Activated CD8-positive, alpha-beta T cell treated with anti-CD3 and anti-CD28 coated beads, Interleukin-2, amount 10 ng/mL, durations not matched to agents 7 days and 5 days (primary cell): ENCODE measurements at regions of chrX and their contacts with region 1.

Region 1: GRCh38 chrX:48737213-48737938 is 24.2 kb upstream of the GLOD5 start:
- DNase-seq: peak; percentile 93
- ATAC-seq: peak; percentile 100
- H3K4me3 Mint-ChIP-seq: peak overlapping the region; percentile 96
- H3K27ac Mint-ChIP-seq: peak overlapping the region; percentile 97
- H3K4me1 Mint-ChIP-seq: peaks cover 21% of the 10 kb centered on the region
- H3K27me3 Mint-ChIP-seq: no peaks in the 10 kb centered on the region

Region 2: GRCh38 chrX:48715072-48715471 is 22.3 kb before region 1 on chrX:
- CTCF ChIA-PET with region 1: interaction called, 3 read pairs
- POLR2A ChIA-PET with region 1: interaction called, 24 read pairs
- DNase-seq: no peak
- ATAC-seq: no peak
- H3K4me3 Mint-ChIP-seq: no peak overlapping the region
- H3K27ac Mint-ChIP-seq: peak overlapping the region; percentile 71
- H3K4me1 Mint-ChIP-seq: peaks cover 76% of the 10 kb centered on the region
- H3K27me3 Mint-ChIP-seq: no peaks in the 10 kb centered on the region

Region 3: GRCh38 chrX:48789366-48790220 is 52.2 kb after region 1 on chrX:
- CTCF ChIA-PET with region 1: no interaction called
- POLR2A ChIA-PET with region 1: no interaction called
- DNase-seq: peak; percentile 25
- ATAC-seq: no peak
- H3K4me3 Mint-ChIP-seq: no peak overlapping the region
- H3K27ac Mint-ChIP-seq: peak overlapping the region; percentile 80
- H3K4me1 Mint-ChIP-seq: peaks cover 16% of the 10 kb centered on the region
- H3K27me3 Mint-ChIP-seq: peaks cover 6% of the 10 kb centered on the region

Region 4: GRCh38 chrX:48864210-48864609 is 126.8 kb after region 1 on chrX:
- CTCF ChIA-PET with region 1: no interaction called
- POLR2A ChIA-PET with region 1: no interaction called
- DNase-seq: no peak
- ATAC-seq: no peak
- H3K4me3 Mint-ChIP-seq: no peak overlapping the region
- H3K27ac Mint-ChIP-seq: no peak overlapping the region
- H3K4me1 Mint-ChIP-seq: no peaks in the 10 kb centered on the region
- H3K27me3 Mint-ChIP-seq: peaks cover 6% of the 10 kb centered on the region